ENCODE measurements at regions of chr1 and their contacts with region 1.

Region 1: GRCh38 chr1:108691942-108692723 is at the start of gene PRPF38B:
- DNase-seq: peak; percentile 86 to 89
- ATAC-seq: peak; percentile 98 to 99
- H3K4me3 ChIP-seq: peak within 1 kb of the TSS; percentile 96
- H3K27ac ChIP-seq: peak within 1 kb of the TSS; percentile 94 to 96
- H3K4me1 ChIP-seq: peaks cover 19% of the 10 kb centered on the region; the same call in 2 of the 3 replicates
- CTCF ChIP-seq: no peak
- EP300 ChIP-seq: no peak
- POLR2A ChIP-seq: peak; percentile 85
- RAD21 ChIP-seq: no peak
- polyA plus RNA-seq, gene PRPF38B: 25.8 and 41.6 TPM in 2 replicates

Region 2: GRCh38 chr1:108199781-108200570 is 492.2 kb before region 1 on chr1 and contains the start of gene SLC25A24:
- CTCF ChIA-PET with region 1: no interaction called
- POLR2A ChIA-PET with region 1: interaction called, 11 read pairs
- DNase-seq: peak; percentile 76 to 78
- ATAC-seq: peak; percentile 96 to 98
- H3K4me3 ChIP-seq: peak within 1 kb of the TSS; percentile 75
- H3K27ac ChIP-seq: peak within 1 kb of the TSS; percentile 94 to 98
- H3K4me1 ChIP-seq: peaks cover 16% of the 10 kb centered on the region; the same call in 1 of the 3 replicates
- CTCF ChIP-seq: no peak
- EP300 ChIP-seq: no peak
- POLR2A ChIP-seq: peak; percentile 74
- RAD21 ChIP-seq: no peak
- polyA plus RNA-seq, gene SLC25A24: 34.2 and 45.6 TPM in 2 replicates

Region 3: GRCh38 chr1:108559215-108560186 is 132.6 kb before region 1 on chr1 and contains the start of gene EEIG2:
- CTCF ChIA-PET with region 1: no interaction called
- POLR2A ChIA-PET with region 1: interaction called, 11 read pairs
- DNase-seq: peak; percentile 51 to 85
- ATAC-seq: peak; percentile 82 to 85
- H3K4me3 ChIP-seq: peak within 1 kb of the TSS; percentile 66
- H3K27ac ChIP-seq: peak within 1 kb of the TSS; percentile 74 to 94
- H3K4me1 ChIP-seq: peaks cover 19% of the 10 kb centered on the region
- CTCF ChIP-seq: peak; percentile 66
- EP300 ChIP-seq: no peak
- POLR2A ChIP-seq: no peak; the same call in 1 of the 2 replicates
- RAD21 ChIP-seq: no peak
- polyA plus RNA-seq, gene EEIG2: 7.4 and 7.9 TPM in 2 replicates

Region 4: GRCh38 chr1:108661030-108661620 is 31.0 kb before region 1 on chr1 and contains the start of gene HENMT1:
- CTCF ChIA-PET with region 1: no interaction called
- POLR2A ChIA-PET with region 1: interaction called, 32 read pairs
- DNase-seq: peak; percentile 19 to 80
- ATAC-seq: peak; percentile 92 to 95
- H3K4me3 ChIP-seq: peak within 1 kb of the TSS; percentile 60
- H3K27ac ChIP-seq: peak within 1 kb of the TSS; percentile 92 to 98
- H3K4me1 ChIP-seq: 0 out of 3 replicates have a peak, but pooled peaks cover 3% of the 10 kb centered on the region
- CTCF ChIP-seq: no peak
- EP300 ChIP-seq: no peak
- POLR2A ChIP-seq: peak; percentile 38
- RAD21 ChIP-seq: no peak
- polyA plus RNA-seq, gene HENMT1: 8.7 and 9.7 TPM in 2 replicates

Region 5: GRCh38 chr1:108703939-108704900 is 12.1 kb after region 1 on chr1:
- CTCF ChIA-PET with region 1: no interaction called
- POLR2A ChIA-PET with region 1: interaction called, 18 read pairs
- DNase-seq: peak; percentile 7 to 36
- ATAC-seq: peak; percentile 60 to 72
- H3K4me3 ChIP-seq: no peak overlapping the region
- H3K27ac ChIP-seq: no peak overlapping the region
- H3K4me1 ChIP-seq: peaks cover 13% of the 10 kb centered on the region
- CTCF ChIP-seq: no peak
- EP300 ChIP-seq: no peak
- POLR2A ChIP-seq: no peak
- RAD21 ChIP-seq: no peak

Region 6: GRCh38 chr1:108746372-108747205 is 54.5 kb after region 1 on chr1 and contains the start of gene STXBP3:
- CTCF ChIA-PET with region 1: interaction called, 5 read pairs
- POLR2A ChIA-PET with region 1: interaction called, 18 read pairs
- DNase-seq: peak; percentile 73 to 98
- ATAC-seq: peak; percentile 91 to 93
- H3K4me3 ChIP-seq: peak within 1 kb of the TSS; percentile 76
- H3K27ac ChIP-seq: peak within 1 kb of the TSS; percentile 97
- H3K4me1 ChIP-seq: 0 out of 3 replicates have a peak, but pooled peaks cover 5% of the 10 kb centered on the region
- CTCF ChIP-seq: peak; percentile 72
- EP300 ChIP-seq: no peak
- POLR2A ChIP-seq: peak; percentile 90
- RAD21 ChIP-seq: peak; percentile 31 to 39; a peak in 3 of 5 replicates
- polyA plus RNA-seq, gene STXBP3: 28.1 and 44.8 TPM in 2 replicates